ENCODE measurements at regions of chr6 and their contacts with region 1.

Region 1: GRCh38 chr6:79078075-79079025 is at the start of gene PHIP:
- DNase-seq: peak; percentile 96
- H3K4me3 Mint-ChIP-seq: peak within 1 kb of the TSS; percentile 96
- H3K27ac Mint-ChIP-seq: peak within 1 kb of the TSS; percentile 96
- H3K4me1 Mint-ChIP-seq: peaks cover 30% of the 10 kb centered on the region
- H3K27me3 Mint-ChIP-seq: peaks cover 18% of the 10 kb centered on the region
- total RNA-seq, gene PHIP: 33.9 and 34.1 TPM in 2 replicates

Region 2: DNA sequence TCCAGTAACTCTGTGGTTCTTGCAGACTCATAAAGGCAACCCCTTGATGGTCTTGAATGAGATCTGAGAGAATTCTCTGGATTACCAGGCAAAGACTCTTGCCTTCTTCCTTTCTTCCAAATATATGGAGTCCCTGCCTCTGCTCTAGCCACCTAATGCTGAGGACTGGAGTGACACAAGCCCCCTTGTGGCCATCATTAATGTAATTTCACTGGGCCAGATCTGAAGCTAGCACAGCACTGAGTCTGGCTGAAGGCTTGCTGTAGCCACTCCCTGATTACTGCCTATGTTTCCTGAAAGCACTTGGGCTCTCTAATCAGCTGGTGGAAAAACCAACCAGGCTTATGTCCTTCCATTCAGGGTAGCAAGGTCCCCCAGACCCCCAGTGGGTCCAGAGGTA is 770.3 kb before region 1 on chr6:
- intact Hi-C with region 1: no loop called
- DNase-seq: no peak
- H3K4me3 Mint-ChIP-seq: no peak overlapping the region
- H3K27ac Mint-ChIP-seq: no peak overlapping the region
- H3K4me1 Mint-ChIP-seq: no peaks in the 10 kb centered on the region
- H3K27me3 Mint-ChIP-seq: no peaks in the 10 kb centered on the region

Region 3: GRCh38 chr6:79034865-79035264 is 43.5 kb before region 1 on chr6:
- intact Hi-C with region 1: loop called (anchors 1 kb)
- DNase-seq: no peak
- H3K4me3 Mint-ChIP-seq: peak overlapping the region; percentile 1
- H3K27ac Mint-ChIP-seq: peak overlapping the region; percentile 56
- H3K4me1 Mint-ChIP-seq: peaks cover 35% of the 10 kb centered on the region
- H3K27me3 Mint-ChIP-seq: no peaks in the 10 kb centered on the region

Region 4: GRCh38 chr6:79062708-79063107 is 15.6 kb before region 1 on chr6:
- intact Hi-C with region 1: loop called (anchors 2 kb)
- DNase-seq: no peak
- H3K4me3 Mint-ChIP-seq: no peak overlapping the region
- H3K27ac Mint-ChIP-seq: no peak overlapping the region
- H3K4me1 Mint-ChIP-seq: peaks cover 9% of the 10 kb centered on the region
- H3K27me3 Mint-ChIP-seq: no peaks in the 10 kb centered on the region

Region 5: GRCh38 chr6:79335133-79335674 is 256.9 kb after region 1 on chr6:
- intact Hi-C with region 1: loop called (anchors 2 kb)
- DNase-seq: no peak
- H3K4me3 Mint-ChIP-seq: no peak overlapping the region
- H3K27ac Mint-ChIP-seq: no peak overlapping the region
- H3K4me1 Mint-ChIP-seq: peaks cover 9% of the 10 kb centered on the region
- H3K27me3 Mint-ChIP-seq: peaks cover 5% of the 10 kb centered on the region

Region 6: GRCh38 chr6:79421707-79422484 is 343.5 kb after region 1 on chr6:
- intact Hi-C with region 1: no loop called
- DNase-seq: no peak
- H3K4me3 Mint-ChIP-seq: no peak overlapping the region
- H3K27ac Mint-ChIP-seq: no peak overlapping the region
- H3K4me1 Mint-ChIP-seq: no peaks in the 10 kb centered on the region
- H3K27me3 Mint-ChIP-seq: peaks cover 5% of the 10 kb centered on the region

Region 7: GRCh38 chr6:79536954-79537747 is 458.8 kb after region 1 on chr6 and contains the start of gene LCA5:
- intact Hi-C with region 1: loop called (anchors 2 kb)
- DNase-seq: peak; percentile 96
- H3K4me3 Mint-ChIP-seq: no peak within 1 kb of the TSS
- H3K27ac Mint-ChIP-seq: no peak within 1 kb of the TSS
- H3K4me1 Mint-ChIP-seq: no peaks in the 10 kb centered on the region
- H3K27me3 Mint-ChIP-seq: peaks cover 16% of the 10 kb centered on the region
- total RNA-seq, gene LCA5: 0.05 and 0.07 TPM in 2 replicates